Activated CD8-positive, alpha-beta T cell treated with anti-CD3 and anti-CD28 coated beads for 36 hours (primary cell): ENCODE measurements at regions of chr12 and their contacts with region 1.

Region 1: DNA sequence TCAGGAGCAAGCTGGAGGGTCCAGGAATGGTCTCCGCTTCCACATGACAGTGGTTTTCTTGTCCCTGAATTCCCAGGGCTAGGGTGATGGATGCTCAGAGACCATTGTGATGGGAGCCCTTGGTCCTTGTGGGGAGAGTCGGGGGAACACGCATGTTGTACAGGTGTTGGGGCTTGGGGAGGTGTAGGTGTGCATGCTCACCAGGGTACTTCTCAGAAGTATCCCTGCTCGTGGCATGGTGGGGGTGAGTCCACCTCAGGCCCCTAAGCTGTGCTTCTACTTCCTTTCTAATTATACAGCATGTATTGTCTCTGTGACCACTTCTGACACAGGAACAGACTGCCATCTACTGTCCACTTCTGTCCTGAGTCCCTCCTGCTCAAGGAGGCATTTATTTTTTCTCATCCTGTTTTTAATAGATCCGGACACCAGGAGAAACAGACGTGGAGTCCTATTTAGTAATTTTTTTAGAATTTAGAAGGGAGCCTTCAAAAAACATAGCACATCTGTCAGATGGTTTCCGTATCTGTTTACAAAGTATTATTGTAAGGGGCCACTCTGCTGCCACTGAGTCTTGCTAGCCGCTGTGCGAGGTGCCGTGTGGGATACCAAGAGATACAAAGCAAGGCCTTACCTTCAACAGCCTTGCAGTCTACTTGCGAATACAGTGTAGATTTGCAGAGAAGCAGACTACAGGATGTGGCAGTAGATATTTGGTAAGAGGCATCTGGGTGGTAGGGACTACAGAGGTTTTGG is 10.5 kb downstream of the NTF3 start:
- DNase-seq: no peak
- ATAC-seq: no peak
- H3K4me3 Mint-ChIP-seq: no peak overlapping the region
- H3K27ac Mint-ChIP-seq: no peak overlapping the region
- H3K4me1 Mint-ChIP-seq: no peaks in the 10 kb centered on the region
- H3K27me3 Mint-ChIP-seq: peaks cover 14% of the 10 kb centered on the region
- CTCF ChIP-seq: no peak

Region 2: DNA sequence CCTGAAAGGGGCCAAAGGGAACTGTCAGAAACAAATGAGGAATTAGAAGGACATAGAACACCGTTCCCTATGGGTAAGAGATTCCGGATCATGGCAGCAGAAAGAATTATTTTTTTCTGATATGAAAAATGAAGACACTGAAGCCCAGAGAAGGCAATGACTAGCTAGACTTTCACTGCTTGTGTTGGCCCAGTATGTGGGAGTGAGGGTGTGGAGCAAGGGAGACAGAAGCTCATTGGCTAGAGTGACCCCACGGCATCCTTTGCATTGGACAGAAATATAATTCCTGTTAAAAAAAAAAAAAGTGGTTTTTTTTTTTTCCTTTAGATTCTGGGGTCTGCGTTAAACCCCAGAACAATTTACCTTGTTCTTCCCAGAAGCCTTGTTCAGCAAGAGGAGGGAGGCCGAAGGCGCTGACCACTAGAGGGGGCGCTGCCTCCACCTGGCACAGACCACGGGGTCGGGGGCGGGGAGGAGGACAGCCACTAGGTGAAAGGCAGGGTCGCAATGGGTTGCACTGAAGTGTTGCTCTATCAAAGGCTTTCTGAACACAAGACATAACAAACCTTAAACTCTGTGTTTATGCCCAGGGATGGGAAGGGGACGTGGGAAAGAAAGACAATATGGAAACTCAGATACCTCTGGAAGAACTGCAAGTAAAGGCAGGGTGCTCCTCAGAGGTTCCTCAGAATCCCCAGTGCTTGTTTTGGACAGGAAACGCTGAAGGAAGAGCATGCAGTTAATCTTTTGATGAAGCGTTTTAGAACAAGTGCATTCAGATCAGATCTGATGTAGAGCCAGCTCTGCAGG is 241.9 kb before region 1 on chr12:
- CTCF ChIA-PET with region 1: no interaction called
- POLR2A ChIA-PET with region 1: no interaction called
- intact Hi-C with region 1: loop called (anchors 10 kb)
- DNase-seq: peak; percentile 66
- ATAC-seq: no peak
- H3K4me3 Mint-ChIP-seq: no peak overlapping the region
- H3K27ac Mint-ChIP-seq: no peak overlapping the region
- H3K4me1 Mint-ChIP-seq: no peaks in the 10 kb centered on the region
- H3K27me3 Mint-ChIP-seq: peaks cover 12% of the 10 kb centered on the region
- CTCF ChIP-seq: peak; percentile 55

Region 3: DNA sequence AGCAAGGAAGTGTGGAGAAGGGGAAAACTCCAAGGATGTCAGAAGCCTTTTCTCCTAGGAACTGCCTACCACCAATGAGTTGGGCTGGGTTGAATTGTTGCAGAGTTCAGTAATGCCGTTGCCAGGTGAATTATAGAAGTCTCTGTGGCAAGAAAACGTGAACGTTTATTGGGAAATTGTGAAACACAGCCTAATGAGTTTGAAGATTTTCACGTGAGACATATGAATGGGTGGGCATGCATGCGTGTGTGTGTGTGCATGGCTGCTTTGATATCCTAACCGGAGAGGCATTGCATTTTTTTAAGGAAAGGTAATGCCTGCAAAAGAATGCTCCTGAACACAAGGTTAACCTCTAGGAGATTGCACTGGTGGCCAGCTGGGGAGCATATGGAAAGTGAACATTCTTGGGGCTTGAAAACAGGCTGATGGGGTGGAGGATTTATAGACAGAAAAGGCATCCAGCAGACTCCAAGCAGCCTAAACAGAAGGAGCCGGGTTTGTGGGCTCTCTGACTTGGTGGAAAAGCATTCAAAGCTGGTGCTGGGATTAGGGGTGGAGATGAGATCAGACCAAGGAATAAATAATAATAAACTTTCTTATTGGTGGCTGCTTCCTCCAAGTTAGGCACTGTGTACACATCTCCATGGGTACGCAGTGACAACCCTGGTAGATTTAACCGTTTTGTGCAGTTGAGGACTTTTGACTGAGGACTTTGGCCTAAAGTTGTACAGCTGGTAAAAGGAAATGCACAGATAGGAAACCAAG is 57.3 kb after region 1 on chr12:
- CTCF ChIA-PET with region 1: no interaction called
- POLR2A ChIA-PET with region 1: no interaction called
- intact Hi-C with region 1: no loop called
- DNase-seq: no peak
- ATAC-seq: no peak
- H3K4me3 Mint-ChIP-seq: no peak overlapping the region
- H3K27ac Mint-ChIP-seq: no peak overlapping the region
- H3K4me1 Mint-ChIP-seq: no peaks in the 10 kb centered on the region
- H3K27me3 Mint-ChIP-seq: peaks cover 4% of the 10 kb centered on the region
- CTCF ChIP-seq: no peak

Region 4: DNA sequence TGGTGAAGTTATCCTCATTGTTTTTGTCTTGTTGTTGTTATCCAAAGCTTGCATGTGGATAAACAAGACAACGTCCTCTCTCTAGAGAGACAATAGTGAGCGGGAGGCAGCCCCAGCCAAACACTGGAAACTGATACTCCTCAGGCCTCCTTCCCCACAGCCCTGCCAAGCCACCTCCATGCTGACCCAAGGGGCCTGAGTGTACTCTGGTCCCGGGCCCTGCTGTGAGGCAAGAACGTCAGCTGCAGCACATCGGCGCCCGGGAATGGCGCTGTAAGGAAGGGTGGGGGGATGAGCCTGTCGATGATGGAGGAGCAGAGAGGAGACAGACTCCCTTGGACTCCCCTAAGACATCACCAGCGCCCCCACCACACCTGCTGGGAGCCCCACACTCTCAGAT is 419.0 kb after region 1 on chr12:
- CTCF ChIA-PET with region 1: no interaction called
- POLR2A ChIA-PET with region 1: no interaction called
- intact Hi-C with region 1: no loop called
- DNase-seq: no peak
- ATAC-seq: no peak
- H3K4me3 Mint-ChIP-seq: no peak overlapping the region
- H3K27ac Mint-ChIP-seq: no peak overlapping the region
- H3K4me1 Mint-ChIP-seq: no peaks in the 10 kb centered on the region
- H3K27me3 Mint-ChIP-seq: peaks cover 1% of the 10 kb centered on the region
- CTCF ChIP-seq: no peak